Activated naive CD4-positive, alpha-beta T cell treated with anti-CD3 and anti-CD28 coated beads, Interleukin-2, amount 10 ng/mL, durations not matched to agents 7 days and 5 days (primary cell): ENCODE measurements at regions of chr20 and their contacts with region 1.

Region 1: DNA sequence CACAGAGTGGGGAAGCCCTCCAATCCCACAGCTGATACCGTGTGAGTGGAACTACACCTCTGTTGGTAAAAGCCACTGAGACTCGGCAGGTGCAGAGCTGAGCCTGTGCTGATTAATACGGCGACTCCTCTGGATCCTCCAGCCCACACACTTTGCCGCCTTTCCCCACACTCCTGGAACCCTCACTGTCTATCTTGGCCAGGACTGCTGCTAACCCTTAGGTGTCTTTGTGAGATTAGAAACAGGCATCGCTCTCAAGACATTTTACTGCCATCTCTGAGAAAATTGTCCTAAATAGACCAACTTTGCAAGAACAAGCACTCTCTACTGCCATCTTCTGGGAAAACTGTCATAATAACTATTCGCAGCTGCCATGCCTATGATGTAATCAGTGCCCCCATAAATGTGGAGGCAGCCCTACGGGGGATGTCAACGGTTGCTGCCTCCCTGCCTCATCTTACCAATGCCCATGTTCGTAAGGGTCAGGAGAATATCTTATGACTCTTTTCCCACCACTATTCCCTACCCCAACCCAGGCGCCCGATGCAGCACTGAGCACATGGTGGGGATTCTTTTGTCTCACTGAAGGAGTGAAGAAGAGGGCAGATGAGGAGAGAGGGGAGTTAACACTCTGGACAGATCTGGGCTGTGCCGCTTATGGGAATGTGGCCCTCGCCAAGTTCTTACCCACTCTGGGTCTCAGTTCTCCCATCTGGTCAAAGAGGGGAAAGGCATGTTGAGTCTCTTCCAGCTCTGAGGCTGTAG is 26.1 kb upstream of the KCNB1 start:
- DNase-seq: no peak
- H3K4me3 Mint-ChIP-seq: no peak overlapping the region
- H3K27ac Mint-ChIP-seq: no peak overlapping the region
- H3K4me1 Mint-ChIP-seq: no peaks in the 10 kb centered on the region
- H3K27me3 Mint-ChIP-seq: peaks cover 67% of the 10 kb centered on the region

Region 2: DNA sequence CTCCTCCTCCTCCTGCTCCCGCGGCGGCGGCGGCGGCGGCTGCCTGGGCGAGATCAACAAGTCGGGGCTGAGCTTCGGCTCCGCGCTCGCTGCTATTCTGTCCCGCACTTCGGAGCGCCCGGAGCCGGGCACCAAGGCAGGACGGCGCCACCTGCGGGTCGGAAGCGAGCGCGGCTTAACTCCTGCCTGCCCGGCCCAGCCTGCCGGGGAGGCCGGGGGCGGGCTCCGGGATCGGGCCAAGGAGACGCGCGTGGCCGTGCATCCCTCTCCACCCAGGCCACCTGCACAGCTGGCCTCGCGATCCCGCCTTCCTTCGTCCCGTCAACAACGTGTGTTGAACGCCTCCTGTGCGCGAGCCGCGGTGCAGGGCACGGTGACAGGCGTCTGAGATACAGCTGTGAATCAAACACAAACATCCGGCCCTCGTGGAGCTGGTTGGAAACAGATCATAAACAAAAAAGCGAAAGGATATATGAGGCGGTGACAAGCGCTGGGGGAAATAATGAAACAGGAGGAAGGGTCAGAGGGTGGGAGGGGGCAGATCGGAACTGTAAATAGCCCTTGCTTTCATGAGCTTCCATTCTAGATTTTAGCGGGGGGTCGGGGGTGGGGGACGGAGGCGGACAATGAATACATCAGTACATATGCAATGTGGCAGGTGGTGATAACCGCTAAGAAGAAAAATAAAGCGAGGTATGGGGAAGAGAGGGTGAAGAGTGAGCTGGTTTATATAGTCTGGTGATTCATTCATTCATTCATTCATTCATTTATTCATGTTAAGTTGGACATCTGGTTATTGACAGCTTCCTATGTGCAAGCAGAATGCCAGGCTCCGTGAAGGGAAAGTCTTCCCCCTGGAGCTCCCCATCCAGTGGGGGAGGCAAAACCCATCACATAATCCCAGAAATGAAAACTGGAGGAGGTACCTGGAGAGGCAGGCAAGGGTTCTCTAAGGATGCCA is 24.2 kb before region 1 on chr20:
- CTCF ChIA-PET with region 1: interaction called, 11 read pairs
- DNase-seq: peak; percentile 77
- H3K4me3 Mint-ChIP-seq: peak overlapping the region; percentile 70
- H3K27ac Mint-ChIP-seq: no peak overlapping the region
- H3K4me1 Mint-ChIP-seq: peaks cover 11% of the 10 kb centered on the region
- H3K27me3 Mint-ChIP-seq: peaks cover 87% of the 10 kb centered on the region

Region 3: DNA sequence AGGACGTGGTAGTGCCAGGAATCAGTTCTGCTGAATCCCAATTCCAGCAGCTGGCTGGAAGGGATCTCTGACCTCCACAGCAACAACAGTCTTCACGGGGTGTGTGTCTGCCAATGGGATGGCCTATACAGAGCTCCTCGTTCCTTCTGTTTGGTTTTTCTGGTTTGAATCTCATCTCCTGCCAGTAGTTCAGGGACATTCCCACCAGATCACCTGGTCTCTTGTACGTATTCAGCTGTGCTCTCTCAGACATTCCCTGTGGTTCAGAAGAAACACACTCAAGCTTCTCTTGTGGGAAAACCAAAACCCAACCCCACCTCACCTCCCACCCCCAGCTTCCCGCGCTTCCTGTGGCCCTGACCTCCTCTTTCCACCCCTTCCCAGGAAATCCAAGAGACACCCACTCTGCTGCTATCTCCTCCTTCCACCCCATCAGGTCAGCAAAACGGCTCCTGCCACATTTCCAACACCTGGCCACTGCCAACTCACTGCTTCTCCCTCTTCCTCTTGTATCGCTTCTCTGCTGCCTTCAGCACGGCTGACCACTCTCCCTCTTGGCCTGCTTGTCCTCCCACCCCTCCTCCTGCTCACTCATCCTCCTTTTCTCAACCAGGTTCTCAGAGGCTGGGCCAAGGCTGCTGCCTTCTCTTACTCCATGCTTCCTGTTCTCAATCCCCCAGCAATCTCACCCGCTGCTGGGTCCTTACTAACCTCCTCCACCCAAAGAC is 122.6 kb after region 1 on chr20:
- CTCF ChIA-PET with region 1: no interaction called
- DNase-seq: no peak
- H3K4me3 Mint-ChIP-seq: no peak overlapping the region
- H3K27ac Mint-ChIP-seq: no peak overlapping the region
- H3K4me1 Mint-ChIP-seq: no peaks in the 10 kb centered on the region
- H3K27me3 Mint-ChIP-seq: peaks cover 22% of the 10 kb centered on the region